ENCODE measurements at regions of chr11 and their contacts with region 1.

Region 1: DNA sequence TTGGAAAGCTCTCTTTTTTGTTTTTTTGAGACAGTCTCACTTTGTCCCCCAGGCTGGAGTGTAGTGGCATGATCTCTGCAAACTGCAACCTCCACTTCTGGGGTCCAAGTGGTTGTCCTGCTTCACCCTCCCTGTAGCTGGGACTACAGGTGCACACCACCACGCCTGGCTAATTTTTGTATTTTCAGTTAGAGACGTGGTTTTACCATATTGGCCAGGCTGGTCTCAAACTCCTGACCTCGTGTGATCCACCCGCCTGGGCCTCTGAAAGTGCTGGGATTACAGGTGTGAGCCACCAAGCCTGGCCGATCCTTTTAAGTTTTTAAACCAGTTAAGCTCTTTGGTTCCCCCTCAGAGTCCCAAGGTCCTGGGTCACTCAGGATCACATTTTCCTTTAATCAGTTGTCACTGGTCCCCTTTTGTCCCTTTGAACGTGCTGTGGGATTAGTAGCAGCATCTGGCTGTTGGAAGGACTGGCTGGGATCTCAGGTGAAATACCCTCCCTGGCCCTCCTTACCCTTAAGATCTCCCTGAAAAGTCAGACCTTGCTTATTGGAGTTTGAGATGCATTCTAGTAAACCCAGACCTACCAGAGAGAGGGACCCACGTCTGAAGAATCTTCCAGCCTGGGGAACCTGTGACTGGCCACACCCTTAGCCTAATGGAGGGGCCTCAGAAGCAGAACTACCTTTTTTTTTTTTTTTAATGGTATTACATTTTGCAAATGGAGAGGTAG is 8.1 kb downstream of the MALAT1 start:
- DNase-seq: peak in 7 of 9 donors; percentile 40 to 65 (median 58)
- ATAC-seq: peak; percentile 57
- H3K4me3 ChIP-seq: peak overlapping the region; percentile 99
- H3K4me3 Mint-ChIP-seq: no peak overlapping the region
- H3K27ac ChIP-seq: peak overlapping the region; percentile 99
- H3K27ac Mint-ChIP-seq: peak overlapping the region in 8 of 9 donors; percentile 78 to 92 (median 88)
- H3K4me1 ChIP-seq: peaks cover 35 to 38% of the 10 kb centered on the region in 2 donors
- H3K4me1 Mint-ChIP-seq: peaks cover 46 to 56% (median 49%) of the 10 kb centered on the region in 7 donors
- H3K27me3 ChIP-seq: no peaks in the 10 kb centered on the region
- H3K27me3 Mint-ChIP-seq: peaks cover 0 to 4% (median 0%) of the 10 kb centered on the region in 5 donors

Region 2: GRCh38 chr11:65366340-65366773 is 140.6 kb before region 1 on chr11:
- CTCF ChIA-PET with region 1: interaction called, 7 read pairs
- POLR2A ChIA-PET with region 1: interaction called, 15 read pairs
- intact Hi-C with region 1: loop called (anchors 1 kb)
- DNase-seq: peak in 7 of 9 donors; percentile 47 to 71 (median 59)
- ATAC-seq: peak; percentile 82
- H3K4me3 ChIP-seq: no peak overlapping the region
- H3K4me3 Mint-ChIP-seq: no peak overlapping the region
- H3K27ac ChIP-seq: no peak overlapping the region
- H3K27ac Mint-ChIP-seq: no peak overlapping the region
- H3K4me1 ChIP-seq: no peaks in the 10 kb centered on the region
- H3K4me1 Mint-ChIP-seq: peaks cover 0 to 9% (median 0%) of the 10 kb centered on the region in 7 donors
- H3K27me3 ChIP-seq: no peaks in the 10 kb centered on the region
- H3K27me3 Mint-ChIP-seq: no peaks in the 10 kb centered on the region

Region 3: DNA sequence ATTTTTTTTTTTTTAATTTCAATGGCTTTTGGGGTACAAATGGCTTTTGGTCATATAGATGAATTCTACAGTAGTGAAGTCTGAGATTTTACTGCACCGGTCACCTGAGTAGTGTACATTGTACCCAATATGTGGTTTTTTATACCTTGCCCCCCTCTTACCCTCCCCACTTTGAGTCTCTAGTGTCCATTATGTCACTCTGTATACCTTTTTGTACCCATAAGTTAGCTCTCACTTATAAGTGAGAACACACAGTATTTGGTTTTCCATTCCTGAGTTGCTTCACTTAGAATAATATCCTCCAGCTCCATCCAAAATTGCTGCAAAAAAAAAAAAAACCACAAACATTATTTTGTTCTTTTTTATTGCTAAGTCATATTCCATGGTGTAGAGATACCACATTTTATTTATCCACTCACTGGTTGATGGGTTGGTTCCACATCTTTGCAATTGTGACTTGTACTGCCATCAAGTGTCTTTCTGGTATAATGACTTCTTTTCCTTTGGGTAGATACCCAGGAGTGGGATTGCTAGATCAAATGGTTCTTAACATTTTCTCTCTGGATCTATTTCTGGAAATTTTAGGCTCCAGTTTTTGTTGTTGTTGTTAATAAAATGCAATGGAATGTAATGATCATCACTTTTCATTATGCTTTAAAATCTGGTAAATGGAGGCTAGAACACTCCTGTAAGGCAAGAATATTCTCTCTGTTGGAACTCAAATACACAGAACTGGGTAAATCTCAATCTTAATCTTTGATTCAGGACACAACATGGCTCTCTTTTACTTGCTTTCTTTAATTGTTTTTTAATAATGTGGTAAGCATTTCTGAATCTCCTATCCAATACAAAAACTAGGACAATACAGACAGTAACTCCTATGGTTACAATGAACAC is 74.0 kb before region 1 on chr11:
- CTCF ChIA-PET with region 1: interaction called, 4 read pairs
- POLR2A ChIA-PET with region 1: interaction called, 2,591 read pairs
- intact Hi-C with region 1: loop called in 1 of 2 experiments (anchors 1 kb)
- DNase-seq: peak in 7 of 9 donors; percentile 49 to 76 (median 62)
- ATAC-seq: peak; percentile 36
- H3K4me3 ChIP-seq: no peak overlapping the region
- H3K4me3 Mint-ChIP-seq: peak overlapping the region in 6 of 10 donors; percentile 25 to 94 (median 48)
- H3K27ac ChIP-seq: no peak overlapping the region
- H3K27ac Mint-ChIP-seq: peak overlapping the region; percentile 69 to 100 (median 87)
- H3K4me1 ChIP-seq: peaks cover 47 to 51% of the 10 kb centered on the region in 2 donors
- H3K4me1 Mint-ChIP-seq: peaks cover 55 to 89% (median 81%) of the 10 kb centered on the region in 7 donors
- H3K27me3 ChIP-seq: no peaks in the 10 kb centered on the region
- H3K27me3 Mint-ChIP-seq: no peaks in the 10 kb centered on the region

Region 4: GRCh38 chr11:65471410-65471762 is 35.6 kb before region 1 on chr11:
- CTCF ChIA-PET with region 1: interaction called, 42 read pairs
- POLR2A ChIA-PET with region 1: interaction called, 1,164 read pairs
- intact Hi-C with region 1: loop called (anchors 1 kb)
- DNase-seq: peak in 2 of 9 donors; percentile 16 to 21
- ATAC-seq: peak; percentile 49
- H3K4me3 ChIP-seq: peak overlapping the region; percentile 15
- H3K4me3 Mint-ChIP-seq: peak overlapping the region in 9 of 10 donors; percentile 14 to 94 (median 84)
- H3K27ac ChIP-seq: peak overlapping the region; percentile 78
- H3K27ac Mint-ChIP-seq: peak overlapping the region; percentile 97 to 100 (median 98)
- H3K4me1 ChIP-seq: peaks cover 10 to 20% of the 10 kb centered on the region in 2 donors
- H3K4me1 Mint-ChIP-seq: peaks cover 6 to 37% (median 15%) of the 10 kb centered on the region in 7 donors
- H3K27me3 ChIP-seq: no peaks in the 10 kb centered on the region
- H3K27me3 Mint-ChIP-seq: no peaks in the 10 kb centered on the region

Region 5: GRCh38 chr11:65524741-65525545 is 18.0 kb after region 1 on chr11 and contains the start of gene SCYL1:
- CTCF ChIA-PET with region 1: interaction called, 4 read pairs
- POLR2A ChIA-PET with region 1: interaction called, 213 read pairs
- intact Hi-C with region 1: loop called in 1 of 2 experiments (anchors 2 kb)
- DNase-seq: peak; percentile 58 to 86 (median 77)
- ATAC-seq: peak; percentile 97
- H3K4me3 ChIP-seq: peak within 1 kb of the TSS; percentile 79
- H3K4me3 Mint-ChIP-seq: peak within 1 kb of the TSS; percentile 86 to 96 (median 90)
- H3K27ac ChIP-seq: peak within 1 kb of the TSS; percentile 96
- H3K27ac Mint-ChIP-seq: peak within 1 kb of the TSS; percentile 89 to 98 (median 95)
- H3K4me1 ChIP-seq: peaks cover 31 to 40% of the 10 kb centered on the region in 2 donors
- H3K4me1 Mint-ChIP-seq: peaks cover 32 to 66% (median 54%) of the 10 kb centered on the region in 7 donors
- H3K27me3 ChIP-seq: no peaks in the 10 kb centered on the region
- H3K27me3 Mint-ChIP-seq: no peaks in the 10 kb centered on the region
- total RNA-seq, gene SCYL1: 63.2 to 79.8 (median 70.4) TPM